ENCODE measurements at regions of chr5 and their contacts with region 1.

Region 1: DNA sequence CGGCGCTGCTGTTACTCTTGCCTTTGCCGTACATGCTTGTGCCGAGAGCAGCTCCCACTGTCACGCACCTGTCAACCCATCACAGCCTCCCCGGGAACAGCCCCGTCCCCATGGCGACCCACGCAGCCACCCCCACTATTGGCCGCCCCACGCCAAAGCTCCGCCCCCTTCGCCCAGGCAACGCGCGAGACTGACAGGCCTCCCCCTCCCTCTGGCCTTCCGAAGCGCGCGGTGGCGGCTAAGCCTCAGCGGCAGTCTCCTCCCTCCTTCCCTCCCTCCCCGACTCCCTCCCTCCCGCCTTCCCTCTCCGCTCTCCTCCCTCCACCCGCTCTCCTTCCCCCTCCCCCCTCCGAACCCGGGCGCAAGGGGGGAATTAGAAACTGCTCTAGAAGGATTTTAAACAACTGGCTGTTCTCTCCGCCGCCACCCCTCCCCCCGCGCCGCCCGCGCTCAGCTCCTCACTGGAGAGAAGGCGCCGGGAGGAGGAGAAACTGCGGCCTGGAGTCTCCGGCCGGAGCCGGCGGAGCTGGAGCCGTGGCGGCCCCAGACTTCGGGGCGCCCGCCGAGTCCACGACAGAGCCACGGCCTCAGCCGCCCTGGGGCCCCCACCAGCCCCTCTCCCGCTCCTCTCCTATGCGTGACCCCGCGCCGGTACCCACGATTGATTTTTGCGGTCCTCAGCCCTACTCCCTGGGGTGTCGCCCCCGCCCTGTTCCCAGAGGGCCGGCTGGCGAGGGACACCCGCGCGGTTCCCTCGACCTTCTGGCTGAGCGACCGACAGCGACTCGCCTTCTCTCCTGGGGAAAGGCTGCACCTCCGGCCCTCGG is at the start of gene SSBP2:
- DNase-seq: peak; percentile 98
- H3K4me3 ChIP-seq: peak within 1 kb of the TSS; percentile 91
- H3K27ac ChIP-seq: peak within 1 kb of the TSS; percentile 98
- H3K4me1 ChIP-seq: peaks cover 44% of the 10 kb centered on the region
- CTCF ChIP-seq: 0 out of 2 replicates have a peak, but pooled peaks have one; percentile 17
- total RNA-seq, gene SSBP2: 131 and 172 TPM in 2 replicates

Region 2: DNA sequence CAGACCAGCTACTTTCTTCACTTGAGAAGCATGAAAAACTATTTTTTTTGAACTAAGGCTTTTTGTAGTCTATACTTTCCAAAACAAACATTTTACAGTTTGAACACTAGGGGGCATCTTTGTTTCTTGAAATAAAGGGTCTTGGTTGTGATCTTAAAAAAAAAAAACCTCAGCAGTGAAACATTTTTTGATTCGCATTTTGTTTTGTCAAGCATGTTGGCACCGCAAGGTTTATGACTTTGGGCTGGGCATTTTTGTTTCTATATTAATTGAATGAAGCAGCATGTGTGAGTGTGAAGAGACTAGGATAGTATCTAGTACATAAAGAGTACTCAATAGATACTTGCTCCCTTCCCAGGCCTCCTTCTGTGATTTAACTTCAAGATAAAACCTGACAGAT is 325.7 kb before region 1 on chr5:
- CTCF ChIA-PET with region 1: no interaction called
- POLR2A ChIA-PET with region 1: interaction called, 6 read pairs
- intact Hi-C with region 1: loop called (anchors 1 kb)
- DNase-seq: peak; percentile 75
- H3K4me3 ChIP-seq: no peak overlapping the region
- H3K27ac ChIP-seq: peak overlapping the region; percentile 24
- H3K4me1 ChIP-seq: peaks cover 13% of the 10 kb centered on the region
- CTCF ChIP-seq: peak; percentile 91

Region 3: GRCh38 chr5:81631124-81631523 is 120.1 kb before region 1 on chr5:
- CTCF ChIA-PET with region 1: no interaction called
- POLR2A ChIA-PET with region 1: interaction called, 3 read pairs
- intact Hi-C with region 1: loop called (anchors 2 kb)
- DNase-seq: peak; percentile 84
- H3K4me3 ChIP-seq: peak overlapping the region; percentile 24
- H3K27ac ChIP-seq: peak overlapping the region; percentile 77
- H3K4me1 ChIP-seq: peaks cover 60% of the 10 kb centered on the region
- CTCF ChIP-seq: no peak

Region 4: GRCh38 chr5:81779125-81779915 is 28.1 kb after region 1 on chr5:
- CTCF ChIA-PET with region 1: no interaction called
- POLR2A ChIA-PET with region 1: interaction called, 11 read pairs
- intact Hi-C with region 1: no loop called
- DNase-seq: peak; percentile 49
- H3K4me3 ChIP-seq: peak overlapping the region; percentile 62
- H3K27ac ChIP-seq: peak overlapping the region; percentile 2
- H3K4me1 ChIP-seq: peaks cover 17% of the 10 kb centered on the region
- CTCF ChIP-seq: no peak

Region 5: GRCh38 chr5:81838307-81838906 is 87.2 kb after region 1 on chr5:
- CTCF ChIA-PET with region 1: interaction called, 3 read pairs
- POLR2A ChIA-PET with region 1: interaction called, 10 read pairs
- intact Hi-C with region 1: no loop called
- DNase-seq: peak; percentile 68
- H3K4me3 ChIP-seq: no peak overlapping the region
- H3K27ac ChIP-seq: no peak overlapping the region
- H3K4me1 ChIP-seq: peaks cover 5% of the 10 kb centered on the region
- CTCF ChIP-seq: peak; percentile 81

Region 6: GRCh38 chr5:82165740-82166530 is 414.7 kb after region 1 on chr5:
- CTCF ChIA-PET with region 1: no interaction called
- POLR2A ChIA-PET with region 1: interaction called, 9 read pairs
- intact Hi-C with region 1: loop called (anchors 2 kb)
- DNase-seq: peak; percentile 76
- H3K4me3 ChIP-seq: no peak overlapping the region
- H3K27ac ChIP-seq: no peak overlapping the region
- H3K4me1 ChIP-seq: no peaks in the 10 kb centered on the region
- CTCF ChIP-seq: peak; percentile 87

Measured in OCI-LY7 (cell line).